ENCODE measurements at regions of chr2 and their contacts with region 1.

Region 1: GRCh38 chr2:102240640-102241370 is 54.0 kb downstream of the IL1RL2 start:
- DNase-seq: peak; percentile 91
- ATAC-seq: peak; percentile 99
- H3K4me3 Mint-ChIP-seq: no peak overlapping the region
- H3K27ac Mint-ChIP-seq: peak overlapping the region; percentile 37
- H3K4me1 Mint-ChIP-seq: peaks cover 32% of the 10 kb centered on the region
- H3K27me3 Mint-ChIP-seq: peaks cover 7% of the 10 kb centered on the region

Region 2: GRCh38 chr2:101883863-101884262 is 356.9 kb before region 1 on chr2:
- CTCF ChIA-PET with region 1: interaction called, 30 read pairs
- DNase-seq: no peak
- ATAC-seq: peak; percentile 55
- H3K4me3 Mint-ChIP-seq: no peak overlapping the region
- H3K27ac Mint-ChIP-seq: no peak overlapping the region
- H3K4me1 Mint-ChIP-seq: peaks cover 2% of the 10 kb centered on the region
- H3K27me3 Mint-ChIP-seq: no peaks in the 10 kb centered on the region

Region 3: DNA sequence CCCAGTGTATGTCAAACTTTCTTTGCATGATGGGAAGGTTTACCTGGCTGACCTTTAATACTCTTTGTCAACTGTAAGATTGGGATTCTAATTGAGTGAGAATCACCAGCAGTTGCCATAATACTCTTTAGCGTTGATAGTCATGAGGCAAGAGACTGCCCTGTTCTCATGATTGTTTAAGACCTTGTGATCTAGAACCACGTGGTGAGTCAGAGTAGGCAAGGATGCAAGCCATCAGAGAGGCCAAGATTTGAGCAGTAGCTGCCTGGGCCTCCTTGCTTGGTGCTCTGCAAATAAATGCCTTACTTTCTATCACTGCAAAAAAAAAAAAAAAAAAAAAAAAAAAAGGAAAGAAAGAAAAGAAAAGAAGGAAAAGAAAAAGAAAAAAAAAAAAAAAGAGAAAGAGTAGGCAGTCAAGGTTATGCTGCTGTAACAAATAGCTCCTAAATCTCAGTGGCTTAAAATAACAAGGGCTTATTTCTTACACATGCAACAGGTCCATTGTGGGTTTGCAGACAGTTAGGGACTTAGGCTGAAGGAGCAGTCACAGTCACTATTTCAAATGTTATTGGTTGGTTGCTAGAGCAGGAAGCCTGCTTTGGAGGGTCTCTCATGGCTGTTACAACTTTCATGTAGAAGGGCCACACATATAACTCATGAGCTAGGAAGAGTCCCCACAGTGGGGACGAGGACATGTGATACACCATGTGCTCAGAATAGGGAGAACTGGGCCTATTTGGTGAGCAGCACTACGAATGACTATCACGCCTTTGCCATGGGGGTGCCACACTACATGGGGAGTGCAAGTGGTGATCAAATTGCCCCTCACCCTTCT is 227.4 kb before region 1 on chr2:
- CTCF ChIA-PET with region 1: interaction called, 46 read pairs
- DNase-seq: no peak
- ATAC-seq: no peak
- H3K4me3 Mint-ChIP-seq: no peak overlapping the region
- H3K27ac Mint-ChIP-seq: no peak overlapping the region
- H3K4me1 Mint-ChIP-seq: peaks cover 5% of the 10 kb centered on the region
- H3K27me3 Mint-ChIP-seq: no peaks in the 10 kb centered on the region

Region 4: DNA sequence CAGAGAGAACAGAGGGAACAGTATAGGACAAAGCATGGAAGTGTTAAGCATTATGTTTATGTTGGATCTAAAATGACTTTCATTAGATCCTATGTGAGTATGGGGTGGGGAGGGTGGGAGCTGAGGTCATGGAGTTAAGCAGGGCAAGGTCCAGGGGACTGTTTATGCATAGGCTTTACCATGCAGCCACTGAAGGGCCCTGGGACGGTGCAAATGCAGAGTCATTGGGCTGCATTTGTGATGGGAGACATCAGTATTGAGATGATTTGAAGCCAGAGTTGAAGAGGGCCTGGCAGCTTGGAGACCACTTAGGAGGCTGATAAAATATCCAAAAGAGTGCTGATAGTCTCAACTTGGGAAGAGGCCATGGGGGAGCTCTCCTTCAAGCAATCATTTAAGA is 31.3 kb before region 1 on chr2:
- CTCF ChIA-PET with region 1: interaction called, 10 read pairs
- DNase-seq: no peak
- ATAC-seq: no peak
- H3K4me3 Mint-ChIP-seq: no peak overlapping the region
- H3K27ac Mint-ChIP-seq: no peak overlapping the region
- H3K4me1 Mint-ChIP-seq: no peaks in the 10 kb centered on the region
- H3K27me3 Mint-ChIP-seq: no peaks in the 10 kb centered on the region

Region 5: DNA sequence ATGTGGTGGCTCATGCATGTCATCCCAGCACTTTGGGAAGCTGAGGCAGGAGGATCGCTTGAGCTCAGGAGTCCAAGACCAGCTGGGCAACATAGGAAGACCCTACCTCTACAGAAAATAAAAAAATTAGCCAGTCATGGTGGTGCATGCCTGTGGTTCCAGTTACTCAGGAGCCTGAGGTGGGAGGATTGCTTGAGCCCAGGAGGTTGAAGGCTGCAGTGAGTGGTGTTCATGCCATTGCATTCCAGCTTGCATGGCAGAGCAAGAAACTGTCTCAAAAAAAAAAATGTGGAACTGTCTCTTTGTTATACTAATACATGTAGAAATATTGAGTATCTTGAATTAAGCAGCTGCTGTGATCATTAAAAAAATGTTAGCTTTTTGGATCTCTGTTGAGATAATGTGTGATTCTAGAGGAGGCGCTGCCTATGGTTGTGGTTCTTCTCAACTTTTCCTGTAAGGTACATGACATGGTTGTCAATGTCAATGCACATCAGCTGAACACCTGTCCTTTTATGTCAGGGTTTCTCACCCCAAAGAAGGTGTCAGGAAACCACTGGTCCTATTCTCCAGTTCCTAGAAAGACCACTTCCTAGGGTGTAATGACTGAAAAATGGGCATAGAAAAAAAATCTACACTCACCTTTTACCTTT is 35.9 kb after region 1 on chr2:
- CTCF ChIA-PET with region 1: interaction called, 16 read pairs
- DNase-seq: peak; percentile 60
- ATAC-seq: peak; percentile 77
- H3K4me3 Mint-ChIP-seq: no peak overlapping the region
- H3K27ac Mint-ChIP-seq: peak overlapping the region; percentile 63
- H3K4me1 Mint-ChIP-seq: peaks cover 52% of the 10 kb centered on the region
- H3K27me3 Mint-ChIP-seq: no peaks in the 10 kb centered on the region

Region 6: GRCh38 chr2:102355526-102356380 is 114.9 kb after region 1 on chr2 and contains the start of gene IL18R1:
- CTCF ChIA-PET with region 1: interaction called, 30 read pairs
- DNase-seq: peak; percentile 78
- ATAC-seq: peak; percentile 93
- H3K4me3 Mint-ChIP-seq: peak within 1 kb of the TSS; percentile 98
- H3K27ac Mint-ChIP-seq: peak within 1 kb of the TSS; percentile 92
- H3K4me1 Mint-ChIP-seq: peaks cover 38% of the 10 kb centered on the region
- H3K27me3 Mint-ChIP-seq: peaks cover 4% of the 10 kb centered on the region
- total RNA-seq, gene IL18R1: 19.8 to 25.9 TPM